Colonic mucosa (tissue), 4 donors: ENCODE measurements at regions of chr17 and their contacts with region 1.

Region 1: GRCh38 chr17:73645050-73645978 is 1.1 kb upstream of the SDK2 start:
- DNase-seq: no peak
- H3K4me3 ChIP-seq: peak overlapping the region; percentile 18
- H3K27ac ChIP-seq: no peak overlapping the region
- H3K4me1 ChIP-seq: peaks cover 14% of the 10 kb centered on the region
- H3K27me3 ChIP-seq: peaks cover 31% of the 10 kb centered on the region
- CTCF ChIP-seq: no peak

Region 2: GRCh38 chr17:73710095-73710592 is 64.8 kb after region 1 on chr17:
- intact Hi-C with region 1: loop called (anchors 5 kb)
- DNase-seq: peak; percentile 82
- H3K4me3 ChIP-seq: no peak overlapping the region
- H3K27ac ChIP-seq: no peak overlapping the region
- H3K4me1 ChIP-seq: no peaks in the 10 kb centered on the region
- H3K27me3 ChIP-seq: no peaks in the 10 kb centered on the region
- CTCF ChIP-seq: peak; percentile 65

Region 3: GRCh38 chr17:73785958-73786743 is 140.8 kb after region 1 on chr17:
- intact Hi-C with region 1: no loop called
- DNase-seq: peak; percentile 88
- H3K4me3 ChIP-seq: no peak overlapping the region
- H3K27ac ChIP-seq: peak overlapping the region; percentile 47
- H3K4me1 ChIP-seq: peaks cover 5% of the 10 kb centered on the region
- H3K27me3 ChIP-seq: no peaks in the 10 kb centered on the region
- CTCF ChIP-seq: no peak